PC-9 (cell line): ENCODE measurements at regions of chr16 and their contacts with region 1.

Region 1: DNA sequence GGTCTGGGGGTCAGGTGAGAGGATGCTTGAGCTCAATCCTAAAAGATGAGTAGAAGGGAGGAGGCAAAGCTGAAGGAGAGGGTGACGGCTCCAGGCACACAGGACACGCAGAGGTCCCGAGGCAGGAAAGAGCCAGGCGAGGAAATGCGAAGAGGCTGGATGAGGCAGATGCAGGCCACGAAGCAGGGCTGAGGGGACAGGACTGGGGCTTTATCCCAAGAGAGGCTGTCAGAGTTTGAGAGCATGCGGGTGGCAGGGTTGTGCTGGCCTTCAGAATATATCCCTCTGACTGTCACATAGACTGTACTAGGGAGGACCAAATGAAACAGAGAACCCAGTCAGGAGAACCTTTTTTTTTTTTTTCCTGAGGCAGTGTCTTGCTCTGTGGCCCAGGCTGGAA is 100.2 kb downstream of the RMI2 start:
- DNase-seq: no peak
- H3K4me3 ChIP-seq: no peak overlapping the region
- H3K27ac ChIP-seq: no peak overlapping the region
- H3K4me1 ChIP-seq: no peaks in the 10 kb centered on the region
- H3K27me3 ChIP-seq: no peaks in the 10 kb centered on the region
- CTCF ChIP-seq: no peak

Region 2: GRCh38 chr16:11484691-11485258 is 39.3 kb after region 1 on chr16:
- CTCF ChIA-PET with region 1: no interaction called
- POLR2A ChIA-PET with region 1: interaction called, 22 read pairs
- intact Hi-C with region 1: no loop called
- DNase-seq: no peak
- H3K4me3 ChIP-seq: no peak overlapping the region
- H3K27ac ChIP-seq: no peak overlapping the region
- H3K4me1 ChIP-seq: no peaks in the 10 kb centered on the region
- H3K27me3 ChIP-seq: no peaks in the 10 kb centered on the region
- CTCF ChIP-seq: no peak